ENCODE measurements at regions of chr7 and their contacts with region 1.

Region 1: GRCh38 chr7:5237286-5237685 is 45.5 kb upstream of the SLC29A4 start:
- DNase-seq: no peak
- ATAC-seq: no peak
- H3K4me3 ChIP-seq: no peak overlapping the region
- H3K27ac ChIP-seq: no peak overlapping the region
- H3K4me1 ChIP-seq: peaks cover 6% of the 10 kb centered on the region
- H3K27me3 ChIP-seq: no peaks in the 10 kb centered on the region
- CTCF ChIP-seq: no peak

Region 2: DNA sequence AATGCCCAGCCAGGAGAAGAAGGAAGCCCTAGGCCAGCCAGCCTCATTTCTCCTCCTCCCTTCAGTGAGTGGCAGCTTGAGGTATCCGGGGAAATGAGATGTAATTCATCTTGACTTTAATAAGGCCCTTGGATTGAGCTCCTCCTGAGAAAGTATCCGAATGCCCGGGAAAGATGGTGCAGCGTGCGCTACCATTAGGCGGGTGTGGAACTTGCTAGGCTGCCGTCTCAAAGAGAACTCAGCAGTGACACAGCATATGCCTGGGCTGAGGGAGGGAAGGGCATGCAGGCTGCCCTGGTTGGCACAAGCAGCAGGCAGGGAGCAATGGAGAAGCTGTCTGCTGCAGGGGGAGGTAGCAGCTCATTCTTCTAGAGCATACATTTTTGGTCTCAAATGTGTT is 1215.0 kb before region 1 on chr7:
- CTCF ChIA-PET with region 1: no interaction called
- POLR2A ChIA-PET with region 1: no interaction called
- in situ Hi-C with region 1: no loop called
- intact Hi-C with region 1: no loop called
- DNase-seq: no peak
- ATAC-seq: no peak
- H3K4me3 ChIP-seq: no peak overlapping the region
- H3K27ac ChIP-seq: no peak overlapping the region
- H3K4me1 ChIP-seq: no peaks in the 10 kb centered on the region
- H3K27me3 ChIP-seq: no peaks in the 10 kb centered on the region
- CTCF ChIP-seq: no peak

Region 3: DNA sequence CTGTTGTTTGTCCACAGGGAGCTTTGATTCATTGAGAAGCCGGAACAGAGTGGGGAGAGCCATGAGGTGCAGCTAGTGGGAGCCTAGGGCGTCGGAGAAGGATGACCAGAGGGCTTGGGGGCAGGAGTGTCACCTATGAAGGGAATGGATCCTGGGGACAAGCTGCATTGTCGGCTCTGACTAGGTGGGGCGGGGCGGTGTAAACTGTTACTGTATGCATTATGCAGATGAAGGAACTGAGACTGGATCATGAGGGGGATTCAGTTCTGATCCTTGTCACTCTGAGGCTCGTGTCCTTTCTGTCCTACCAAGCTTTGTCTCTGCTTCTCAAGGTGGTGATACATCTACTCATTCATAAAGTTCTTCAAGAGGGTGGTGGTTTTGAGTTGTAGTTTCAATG is 238.4 kb before region 1 on chr7:
- CTCF ChIA-PET with region 1: no interaction called
- POLR2A ChIA-PET with region 1: interaction called, 10 read pairs
- in situ Hi-C with region 1: no loop called
- intact Hi-C with region 1: no loop called
- DNase-seq: no peak
- ATAC-seq: no peak
- H3K4me3 ChIP-seq: no peak overlapping the region
- H3K27ac ChIP-seq: no peak overlapping the region
- H3K4me1 ChIP-seq: no peaks in the 10 kb centered on the region
- H3K27me3 ChIP-seq: no peaks in the 10 kb centered on the region
- CTCF ChIP-seq: no peak

Region 4: DNA sequence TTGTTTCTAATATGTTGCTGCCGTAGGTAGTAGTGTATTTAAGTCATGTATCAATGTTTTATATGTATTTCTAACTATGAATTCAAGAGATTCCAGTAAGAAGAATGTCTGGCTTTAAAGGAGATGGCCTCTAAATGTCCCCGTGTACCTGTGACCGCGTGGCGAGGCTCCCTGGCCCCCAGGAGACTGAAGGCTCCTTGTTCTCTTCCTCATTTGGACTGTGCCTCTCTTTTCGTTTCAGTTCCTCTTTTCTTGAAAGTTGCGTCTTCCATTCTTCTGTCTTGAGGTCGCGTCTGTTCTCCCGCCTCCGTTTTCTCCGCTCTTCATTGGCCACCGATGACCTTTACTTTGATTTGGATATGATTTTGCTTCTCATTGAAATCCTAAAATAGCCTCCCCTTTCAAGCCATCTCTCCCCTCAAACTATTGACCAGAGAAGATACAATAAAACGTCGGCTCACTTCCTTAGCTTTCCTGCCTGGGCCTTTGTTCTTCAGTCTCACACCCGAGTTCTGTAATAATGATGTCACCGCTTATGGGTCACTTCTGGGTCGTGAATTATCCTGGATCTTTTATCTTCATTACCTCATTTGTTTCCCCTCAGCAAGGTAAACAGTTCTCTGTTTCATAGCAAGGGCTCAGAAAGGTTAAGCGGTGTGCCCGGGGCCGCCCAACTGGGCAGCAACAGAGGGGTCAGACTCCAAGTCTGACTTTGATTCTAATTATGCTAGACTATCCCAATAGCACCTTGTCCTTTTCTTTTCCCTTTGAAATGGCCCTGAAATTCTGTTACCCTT is 18.5 kb before region 1 on chr7:
- CTCF ChIA-PET with region 1: interaction called, 14 read pairs
- POLR2A ChIA-PET with region 1: no interaction called
- in situ Hi-C with region 1: no loop called
- intact Hi-C with region 1: no loop called
- DNase-seq: no peak
- ATAC-seq: no peak
- H3K4me3 ChIP-seq: no peak overlapping the region
- H3K27ac ChIP-seq: no peak overlapping the region
- H3K4me1 ChIP-seq: peaks cover 3% of the 10 kb centered on the region; the same call in 1 of the 2 replicates
- H3K27me3 ChIP-seq: no peaks in the 10 kb centered on the region
- CTCF ChIP-seq: no peak

Region 5: DNA sequence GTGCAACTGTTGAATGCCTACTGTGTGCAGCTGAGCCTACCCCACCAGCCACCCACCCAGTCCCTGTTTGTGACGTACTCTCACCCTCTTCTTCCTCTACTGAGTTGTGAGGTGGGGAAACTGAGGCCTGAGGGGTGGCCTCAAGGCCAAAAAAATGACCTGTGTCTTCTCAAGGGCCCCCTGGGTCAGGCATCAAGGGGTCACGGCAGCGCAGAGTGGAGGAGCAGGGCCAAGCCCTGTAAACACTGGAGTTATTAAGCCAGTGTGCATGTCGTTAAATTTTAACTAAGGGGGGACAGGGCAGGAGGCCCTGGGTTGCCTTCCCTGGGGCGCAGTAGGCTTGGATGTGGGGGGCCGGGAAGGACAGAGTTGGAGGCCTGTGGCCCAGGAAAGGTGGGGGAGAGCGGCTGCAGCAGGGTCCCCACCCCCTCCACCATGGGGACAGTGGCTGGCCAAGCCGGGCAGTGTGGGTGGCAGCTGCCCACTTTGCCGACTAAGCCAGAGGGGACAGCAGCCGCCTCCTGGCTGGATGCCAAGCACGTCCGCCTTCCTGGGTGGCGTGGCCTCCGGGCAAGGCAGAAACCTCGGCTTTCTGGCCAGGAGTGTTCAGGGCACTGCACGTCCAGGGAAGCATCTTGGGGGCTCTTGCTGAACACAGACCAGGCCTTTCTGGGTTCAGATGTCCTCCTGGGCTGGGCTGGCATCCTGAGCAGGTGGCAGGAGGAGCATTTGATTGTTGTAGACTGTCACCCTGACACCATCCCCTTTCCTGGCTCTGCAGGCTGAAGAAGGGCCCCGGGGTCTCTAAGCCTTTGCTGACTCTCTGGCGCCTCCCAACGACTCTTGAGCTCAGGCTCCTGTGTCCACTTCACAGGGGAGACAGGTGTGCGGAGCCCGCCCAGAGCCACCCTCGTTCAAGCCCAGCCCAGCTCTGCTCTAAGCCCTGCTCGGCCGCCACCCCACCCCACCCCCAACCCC is 47.3 kb after region 1 on chr7:
- CTCF ChIA-PET with region 1: interaction called, 25 read pairs
- POLR2A ChIA-PET with region 1: no interaction called
- in situ Hi-C with region 1: no loop called
- intact Hi-C with region 1: loop called (anchors 2 kb)
- DNase-seq: no peak
- ATAC-seq: peak; percentile 65
- H3K4me3 ChIP-seq: peak overlapping the region in 1 of 2 experiments; percentile 14; a peak in 1 of 4 replicates
- H3K27ac ChIP-seq: no peak overlapping the region
- H3K4me1 ChIP-seq: peaks cover 8% of the 10 kb centered on the region
- H3K27me3 ChIP-seq: no peaks in the 10 kb centered on the region
- CTCF ChIP-seq: peak; percentile 86; the same call in 1 of the 2 replicates